MCF 10A (cell line): ENCODE measurements at regions of chr20 and their contacts with region 1.

Region 1: GRCh38 chr20:63178889-63179686 is 36.8 kb downstream of the YTHDF1 start:
- DNase-seq: peak; percentile 20
- H3K4me3 Mint-ChIP-seq: no peak overlapping the region
- H3K27ac Mint-ChIP-seq: no peak overlapping the region
- H3K4me1 Mint-ChIP-seq: no peaks in the 10 kb centered on the region
- H3K27me3 Mint-ChIP-seq: peaks cover 30% of the 10 kb centered on the region
- CTCF ChIP-seq: peak; percentile 48

Region 2: DNA sequence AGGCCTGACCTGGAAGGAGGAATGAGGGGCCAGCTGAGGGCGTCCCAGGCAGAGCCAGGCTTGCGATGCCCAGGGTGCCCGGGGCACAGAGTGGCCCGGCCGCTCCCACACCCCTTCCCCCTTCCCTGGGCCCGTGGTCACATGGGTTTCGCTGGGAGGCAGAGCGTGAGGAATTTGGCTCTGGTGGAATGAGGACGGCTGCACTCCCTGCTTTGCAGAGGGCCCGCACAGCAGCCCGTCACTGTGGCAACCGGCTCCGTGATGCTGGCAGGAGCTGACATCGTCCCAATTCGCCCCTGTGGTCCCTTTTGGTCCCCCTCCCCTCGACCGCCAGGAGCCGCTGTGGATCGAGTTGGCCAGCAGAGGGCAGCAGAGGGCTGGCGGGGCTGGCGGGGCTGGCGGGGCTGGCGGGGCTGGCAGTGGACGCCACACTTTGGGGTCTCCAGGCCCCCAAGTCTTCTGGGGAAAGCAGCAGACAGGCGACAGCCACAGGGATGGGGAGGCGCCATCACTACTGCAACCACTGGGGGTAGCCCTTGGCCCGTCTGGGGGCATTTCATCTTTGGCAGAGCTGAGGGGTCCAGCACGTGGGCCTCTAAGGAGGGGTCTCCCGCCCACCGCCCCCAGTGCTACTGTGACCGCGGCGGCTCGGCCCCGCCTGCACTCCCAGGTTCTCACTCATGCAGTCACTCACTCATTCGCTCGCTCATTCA is 122.7 kb before region 1 on chr20:
- CTCF ChIA-PET with region 1: interaction called, 6 read pairs
- POLR2A ChIA-PET with region 1: no interaction called
- intact Hi-C with region 1: loop called (anchors 2 kb)
- DNase-seq: peak; percentile 11
- H3K4me3 Mint-ChIP-seq: no peak overlapping the region
- H3K27ac Mint-ChIP-seq: no peak overlapping the region
- H3K4me1 Mint-ChIP-seq: no peaks in the 10 kb centered on the region
- H3K27me3 Mint-ChIP-seq: peaks cover 33% of the 10 kb centered on the region
- CTCF ChIP-seq: peak; percentile 86

Region 3: GRCh38 chr20:63216041-63216848 is 37.2 kb after region 1 on chr20 and contains the start of gene YTHDF1:
- CTCF ChIA-PET with region 1: interaction called, 9 read pairs
- POLR2A ChIA-PET with region 1: no interaction called
- intact Hi-C with region 1: loop called (anchors 1 kb)
- DNase-seq: peak; percentile 95
- H3K4me3 Mint-ChIP-seq: peak within 1 kb of the TSS; percentile 91
- H3K27ac Mint-ChIP-seq: peak within 1 kb of the TSS; percentile 92
- H3K4me1 Mint-ChIP-seq: peaks cover 35% of the 10 kb centered on the region
- H3K27me3 Mint-ChIP-seq: peaks cover 17% of the 10 kb centered on the region
- CTCF ChIP-seq: no peak
- total RNA-seq, gene YTHDF1: 47.1 and 49.5 TPM in 2 replicates

Region 4: GRCh38 chr20:63230800-63231268 is 51.7 kb after region 1 on chr20:
- CTCF ChIA-PET with region 1: interaction called, 7 read pairs
- POLR2A ChIA-PET with region 1: no interaction called
- intact Hi-C with region 1: loop called (anchors 1 kb)
- DNase-seq: peak; percentile 58
- H3K4me3 Mint-ChIP-seq: no peak overlapping the region
- H3K27ac Mint-ChIP-seq: no peak overlapping the region
- H3K4me1 Mint-ChIP-seq: no peaks in the 10 kb centered on the region
- H3K27me3 Mint-ChIP-seq: peaks cover 44% of the 10 kb centered on the region
- CTCF ChIP-seq: peak; percentile 31